Activated T-helper 1 cell treated with anti-CD3 and anti-CD28 coated beads, Interleukin-12 subunit alpha, Interleukin-12 subunit beta, Interleukin-2, Interleukin-4 antibody, amounts not matched to agents 30 ng/mL and 10 ng/mL and 1 ng/mL, durations not matched to agents 14 hours and 24 hours and 36 hours (primary cell): ENCODE measurements at regions of chr11 and their contacts with region 1.

Region 1: GRCh38 chr11:76598426-76598839 is 72.1 kb downstream of the LRRC32 start:
- DNase-seq: no peak
- H3K4me3 Mint-ChIP-seq: no peak overlapping the region
- H3K27ac Mint-ChIP-seq: no peak overlapping the region
- H3K4me1 Mint-ChIP-seq: peaks cover 30% of the 10 kb centered on the region
- H3K27me3 Mint-ChIP-seq: peaks cover 2% of the 10 kb centered on the region

Region 2: GRCh38 chr11:76577199-76577920 is 21.1 kb before region 1 on chr11:
- intact Hi-C with region 1: loop called (anchors 1 kb)
- DNase-seq: no peak
- H3K4me3 Mint-ChIP-seq: no peak overlapping the region
- H3K27ac Mint-ChIP-seq: no peak overlapping the region
- H3K4me1 Mint-ChIP-seq: peaks cover 10% of the 10 kb centered on the region
- H3K27me3 Mint-ChIP-seq: peaks cover 5% of the 10 kb centered on the region

Region 3: DNA sequence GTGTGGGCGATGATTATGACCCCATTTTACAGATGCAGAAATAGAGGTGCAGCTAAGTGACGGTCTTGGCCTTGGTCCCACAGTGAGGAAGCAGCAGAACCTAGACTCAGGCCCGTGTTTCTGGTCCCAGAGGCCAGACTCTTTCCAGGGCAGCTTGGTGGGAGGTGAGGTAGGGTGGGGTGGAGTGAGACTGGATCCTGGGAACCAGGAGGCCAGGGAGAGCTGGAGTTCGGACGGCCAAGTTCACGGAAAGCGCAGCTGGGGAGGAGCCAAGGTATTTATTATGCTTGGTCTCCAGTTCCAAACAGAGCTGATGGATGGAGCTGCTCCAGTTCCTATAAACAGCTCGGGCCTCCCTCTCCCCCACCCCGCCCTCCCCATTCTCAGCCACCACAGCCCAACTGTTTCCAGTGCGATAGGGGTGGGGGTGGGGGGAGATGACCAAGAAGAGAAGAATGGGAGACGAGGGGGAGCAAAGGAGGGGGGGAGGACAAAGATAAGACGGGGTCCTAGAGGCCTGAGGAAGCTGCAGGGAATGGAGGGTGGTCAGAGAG is 55.9 kb after region 1 on chr11:
- intact Hi-C with region 1: no loop called
- DNase-seq: no peak
- H3K4me3 Mint-ChIP-seq: no peak overlapping the region
- H3K27ac Mint-ChIP-seq: no peak overlapping the region
- H3K4me1 Mint-ChIP-seq: no peaks in the 10 kb centered on the region
- H3K27me3 Mint-ChIP-seq: peaks cover 15% of the 10 kb centered on the region